ENCODE measurements at regions of chr17 and their contacts with region 1.

Region 1: GRCh38 chr17:56715613-56716357 is 117.9 kb downstream of the C17orf67 start:
- DNase-seq: peak; percentile 76
- H3K4me3 Mint-ChIP-seq: no peak overlapping the region
- H3K27ac Mint-ChIP-seq: no peak overlapping the region
- H3K4me1 Mint-ChIP-seq: no peaks in the 10 kb centered on the region
- H3K27me3 Mint-ChIP-seq: peaks cover 36% of the 10 kb centered on the region
- CTCF ChIP-seq: peak; percentile 51

Region 2: DNA sequence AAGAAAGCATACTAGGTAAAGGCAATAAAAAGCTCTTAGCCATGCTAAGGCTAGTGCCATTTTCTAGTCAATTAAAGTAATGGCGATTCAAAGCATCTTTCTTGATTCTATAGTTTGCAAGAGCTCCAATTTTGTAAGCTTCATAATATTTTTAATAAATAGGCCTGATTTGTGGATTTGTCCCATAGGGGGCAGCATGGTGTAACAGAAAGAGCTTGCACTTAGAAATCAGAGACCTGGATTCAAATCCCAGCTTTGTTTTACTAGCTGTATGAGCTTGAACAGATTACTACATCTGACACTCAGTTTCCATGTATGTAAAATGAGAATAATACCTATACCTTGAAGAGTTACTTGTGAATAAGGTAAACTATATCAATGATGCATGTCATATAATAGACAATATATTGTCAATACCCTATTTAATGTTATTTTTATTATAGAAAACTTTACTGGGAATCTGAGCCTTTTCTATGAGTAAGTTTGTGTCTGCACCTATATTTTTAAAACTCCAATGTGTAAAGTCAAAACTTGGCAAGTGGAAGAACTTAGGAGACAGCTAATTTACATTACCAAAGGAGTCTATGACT is 215.9 kb before region 1 on chr17:
- CTCF ChIA-PET with region 1: interaction called, 24 read pairs
- intact Hi-C with region 1: loop called (anchors 2 kb)
- DNase-seq: peak; percentile 22
- H3K4me3 Mint-ChIP-seq: no peak overlapping the region
- H3K27ac Mint-ChIP-seq: no peak overlapping the region
- H3K4me1 Mint-ChIP-seq: no peaks in the 10 kb centered on the region
- H3K27me3 Mint-ChIP-seq: peaks cover 34% of the 10 kb centered on the region
- CTCF ChIP-seq: no peak

Region 3: DNA sequence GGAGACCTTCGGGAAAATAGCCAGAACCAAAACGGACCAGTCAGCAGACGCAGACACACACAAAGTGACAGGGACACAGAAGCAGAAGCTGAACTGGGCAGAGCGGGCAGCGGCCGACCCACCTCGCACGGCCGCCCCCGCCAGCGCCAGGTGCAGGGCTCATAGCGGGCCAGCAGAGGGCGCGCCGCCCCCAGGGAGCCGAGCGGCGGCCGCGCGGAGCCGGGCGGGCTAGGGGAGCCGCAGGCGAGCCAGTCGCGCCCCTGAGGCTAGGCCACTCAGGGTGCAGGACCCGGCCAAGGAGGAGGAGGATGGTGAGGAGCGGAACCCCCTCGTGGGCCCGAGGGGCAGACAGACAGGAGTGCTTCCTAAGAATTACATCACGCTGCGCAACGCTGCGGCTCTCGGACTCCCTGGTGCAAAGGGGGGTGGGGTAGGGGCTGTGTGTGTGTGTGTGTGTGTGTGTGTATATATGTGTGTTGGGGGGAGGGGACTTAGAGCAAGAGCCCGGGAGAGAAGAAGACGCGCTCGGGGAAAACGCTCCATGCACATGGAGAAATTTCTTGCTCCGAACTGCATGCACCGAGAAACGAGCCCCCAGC is 123.2 kb before region 1 on chr17:
- CTCF ChIA-PET with region 1: interaction called, 52 read pairs
- intact Hi-C with region 1: loop called (anchors 1 kb)
- DNase-seq: peak; percentile 75
- H3K4me3 Mint-ChIP-seq: peak overlapping the region; percentile 74
- H3K27ac Mint-ChIP-seq: no peak overlapping the region
- H3K4me1 Mint-ChIP-seq: peaks cover 7% of the 10 kb centered on the region
- H3K27me3 Mint-ChIP-seq: peaks cover 62% of the 10 kb centered on the region
- CTCF ChIP-seq: peak; percentile 89

Region 4: GRCh38 chr17:56699186-56699895 is 16.4 kb before region 1 on chr17:
- CTCF ChIA-PET with region 1: interaction called, 10 read pairs
- intact Hi-C with region 1: no loop called
- DNase-seq: peak; percentile 86
- H3K4me3 Mint-ChIP-seq: peak overlapping the region; percentile 28
- H3K27ac Mint-ChIP-seq: peak overlapping the region; percentile 95
- H3K4me1 Mint-ChIP-seq: peaks cover 14% of the 10 kb centered on the region
- H3K27me3 Mint-ChIP-seq: no peaks in the 10 kb centered on the region
- CTCF ChIP-seq: no peak

Region 5: DNA sequence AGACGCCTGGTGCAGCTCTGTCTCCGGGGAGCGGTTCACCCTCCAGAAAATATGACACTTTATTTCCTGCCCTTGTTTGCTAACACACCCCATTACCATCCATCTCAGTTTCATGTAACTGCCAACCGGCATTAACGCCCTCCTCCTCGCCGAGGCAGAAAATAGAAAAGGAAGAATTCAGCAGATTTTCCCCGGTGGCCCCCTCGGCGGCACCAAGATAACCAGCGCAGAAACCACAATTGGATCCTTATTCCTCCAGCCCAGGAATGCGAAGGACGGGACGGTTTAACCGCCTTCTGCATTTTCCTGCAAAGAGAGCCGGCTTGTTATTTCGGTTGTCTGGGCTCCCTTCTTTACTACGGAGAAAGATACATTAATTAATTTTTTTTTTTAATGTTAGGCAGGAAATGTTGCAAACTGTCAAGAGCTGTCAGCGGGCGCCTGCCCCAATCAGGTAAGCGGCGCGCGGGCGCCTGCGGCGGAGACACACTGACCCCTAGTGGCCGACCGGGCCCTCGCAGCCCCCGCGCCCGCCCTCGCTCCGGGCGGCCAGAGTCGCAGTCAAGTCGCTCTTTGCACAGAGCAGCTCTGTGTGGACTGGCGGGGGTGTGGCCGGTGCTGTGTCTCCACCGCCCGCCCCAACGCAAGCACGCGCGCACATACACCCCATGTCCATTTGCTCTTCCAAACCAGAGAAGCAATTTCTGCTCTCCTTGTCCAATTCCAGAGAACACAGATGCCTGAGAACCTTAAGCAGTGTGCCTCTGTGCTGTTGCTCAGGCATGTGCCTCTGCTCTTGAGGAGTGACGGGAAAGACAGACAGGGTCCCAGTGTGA is 64.3 kb after region 1 on chr17:
- CTCF ChIA-PET with region 1: interaction called, 5 read pairs
- intact Hi-C with region 1: loop called (anchors 2 kb)
- DNase-seq: peak; percentile 85
- H3K4me3 Mint-ChIP-seq: peak overlapping the region; percentile 59
- H3K27ac Mint-ChIP-seq: peak overlapping the region; percentile 42
- H3K4me1 Mint-ChIP-seq: peaks cover 24% of the 10 kb centered on the region
- H3K27me3 Mint-ChIP-seq: peaks cover 33% of the 10 kb centered on the region
- CTCF ChIP-seq: peak; percentile 77

Region 6: DNA sequence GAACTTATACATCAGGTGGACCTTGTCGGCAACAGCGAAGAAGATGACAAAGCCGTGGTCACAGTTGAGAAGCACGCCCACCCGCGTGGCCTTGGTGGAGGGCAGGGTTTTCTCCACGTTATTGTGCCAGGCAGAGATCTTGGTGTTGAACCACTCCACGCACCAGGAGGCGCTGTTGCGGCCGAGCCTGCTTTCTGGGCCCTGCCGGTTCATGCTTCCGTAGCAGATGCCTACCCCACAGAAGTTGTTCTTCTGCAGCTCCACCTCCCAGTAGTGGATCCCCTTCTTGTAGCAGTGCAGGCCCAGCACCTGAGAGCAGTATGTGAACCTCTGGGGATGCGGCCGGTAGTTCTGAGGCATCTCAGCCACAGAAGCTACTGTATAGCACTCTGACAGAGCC is 176.0 kb after region 1 on chr17:
- CTCF ChIA-PET with region 1: no interaction called
- intact Hi-C with region 1: no loop called
- DNase-seq: no peak
- H3K4me3 Mint-ChIP-seq: no peak overlapping the region
- H3K27ac Mint-ChIP-seq: peak overlapping the region; percentile 10
- H3K4me1 Mint-ChIP-seq: peaks cover 9% of the 10 kb centered on the region
- H3K27me3 Mint-ChIP-seq: no peaks in the 10 kb centered on the region
- CTCF ChIP-seq: no peak